AG04450 (cell line): ENCODE measurements at regions of chr11 and their contacts with region 1.

Region 1: DNA sequence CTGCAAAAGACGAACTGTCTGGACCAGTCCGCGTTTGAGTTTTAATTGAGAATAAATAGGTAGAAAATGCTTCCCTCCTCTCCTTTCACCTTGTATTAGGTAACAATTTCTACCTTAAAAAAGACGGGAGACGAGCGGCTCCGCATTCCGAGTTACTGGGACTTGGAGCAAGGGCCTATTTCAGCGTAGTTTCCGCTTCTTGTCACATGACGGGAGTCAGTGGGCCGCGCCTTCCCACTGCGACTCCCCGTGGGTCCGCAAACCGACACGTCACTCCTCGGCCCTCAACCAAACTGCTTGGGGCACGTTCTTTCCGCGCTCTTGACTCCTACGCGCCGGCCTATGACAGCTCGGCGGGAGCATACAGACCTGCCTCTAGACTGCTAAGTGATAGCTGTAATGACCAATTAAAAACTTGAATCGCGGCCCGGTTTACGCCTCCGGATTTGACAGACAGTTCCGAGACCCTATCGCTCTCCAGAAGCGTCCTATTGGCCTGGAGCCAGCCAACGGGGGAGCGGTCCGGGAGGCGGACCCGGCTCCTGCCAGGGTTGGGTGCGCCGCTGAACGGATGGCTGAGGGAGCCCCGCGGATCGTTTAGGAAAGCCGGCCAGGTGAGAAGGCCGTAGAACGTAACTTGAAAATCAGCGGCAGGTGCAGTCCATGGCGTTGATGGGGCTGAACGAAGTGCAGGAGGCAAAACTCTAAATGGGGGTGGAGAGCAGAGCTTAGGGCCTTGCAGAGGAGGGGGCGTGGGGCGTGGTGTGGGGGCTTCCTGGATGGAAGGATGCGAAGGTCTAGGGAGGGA is at the start of gene STT3A:
- DNase-seq: peak; percentile 100
- H3K4me3 ChIP-seq: peak within 1 kb of the TSS; percentile 98
- H3K27ac ChIP-seq: peak within 1 kb of the TSS; percentile 99
- H3K27me3 ChIP-seq: no peaks in the 10 kb centered on the region
- CTCF ChIP-seq: no peak
- polyA plus RNA-seq, gene STT3A: 382 and 401 TPM in 2 replicates

Region 2: DNA sequence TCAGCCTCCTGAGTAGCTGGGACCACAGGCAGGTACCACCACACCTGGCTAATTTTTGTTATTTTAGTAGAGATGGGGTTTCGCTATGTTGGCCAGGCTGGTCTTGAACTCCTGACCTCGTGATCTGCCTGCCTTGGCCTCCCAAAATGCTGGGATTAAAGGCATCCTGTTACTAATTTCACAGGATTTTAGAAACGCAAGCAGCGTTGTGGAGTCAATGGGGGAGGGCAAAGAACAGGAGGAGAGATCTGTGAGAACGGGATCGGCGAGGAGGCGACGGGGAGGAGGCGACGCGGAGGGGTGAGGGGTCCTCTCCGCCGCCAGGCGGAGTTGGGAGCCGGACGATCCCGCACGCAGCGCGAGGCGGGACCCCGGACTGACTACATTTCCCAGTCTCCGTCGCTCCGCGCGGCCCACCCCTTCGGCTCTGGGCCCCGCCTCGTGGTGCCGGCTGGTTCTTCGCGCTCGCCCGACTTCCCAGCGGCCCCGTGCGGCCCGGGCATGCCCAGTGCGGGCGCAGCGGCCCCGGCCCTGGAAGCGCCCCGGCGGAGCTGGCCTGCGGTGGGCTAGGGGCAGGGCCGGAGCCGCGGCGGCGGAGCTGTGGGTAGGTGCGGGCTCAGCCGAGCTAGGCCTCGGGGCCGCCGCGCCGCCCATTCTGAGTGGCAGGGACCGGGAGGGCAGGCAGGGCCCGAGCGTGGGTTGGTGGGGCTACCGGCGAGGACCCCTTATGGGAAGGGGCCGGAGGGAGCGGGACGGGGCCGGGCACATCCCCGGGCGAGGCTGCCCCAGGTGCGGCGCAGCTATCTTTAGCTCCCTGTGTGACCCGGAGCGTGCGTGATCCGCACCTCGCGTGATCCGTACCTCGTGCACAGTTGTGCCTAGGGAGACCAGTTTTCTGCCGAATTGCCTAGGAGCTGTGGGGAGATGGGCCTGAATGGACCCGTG is 23.3 kb before region 1 on chr11 and contains the start of gene EI24:
- CTCF ChIA-PET with region 1: no interaction called
- POLR2A ChIA-PET with region 1: interaction called, 14 read pairs
- DNase-seq: peak; percentile 78
- H3K4me3 ChIP-seq: peak within 1 kb of the TSS; percentile 96
- H3K27ac ChIP-seq: peak within 1 kb of the TSS; percentile 31
- H3K27me3 ChIP-seq: no peaks in the 10 kb centered on the region
- CTCF ChIP-seq: peak; percentile 71
- polyA plus RNA-seq, gene EI24: 129 and 150 TPM in 2 replicates

Region 3: DNA sequence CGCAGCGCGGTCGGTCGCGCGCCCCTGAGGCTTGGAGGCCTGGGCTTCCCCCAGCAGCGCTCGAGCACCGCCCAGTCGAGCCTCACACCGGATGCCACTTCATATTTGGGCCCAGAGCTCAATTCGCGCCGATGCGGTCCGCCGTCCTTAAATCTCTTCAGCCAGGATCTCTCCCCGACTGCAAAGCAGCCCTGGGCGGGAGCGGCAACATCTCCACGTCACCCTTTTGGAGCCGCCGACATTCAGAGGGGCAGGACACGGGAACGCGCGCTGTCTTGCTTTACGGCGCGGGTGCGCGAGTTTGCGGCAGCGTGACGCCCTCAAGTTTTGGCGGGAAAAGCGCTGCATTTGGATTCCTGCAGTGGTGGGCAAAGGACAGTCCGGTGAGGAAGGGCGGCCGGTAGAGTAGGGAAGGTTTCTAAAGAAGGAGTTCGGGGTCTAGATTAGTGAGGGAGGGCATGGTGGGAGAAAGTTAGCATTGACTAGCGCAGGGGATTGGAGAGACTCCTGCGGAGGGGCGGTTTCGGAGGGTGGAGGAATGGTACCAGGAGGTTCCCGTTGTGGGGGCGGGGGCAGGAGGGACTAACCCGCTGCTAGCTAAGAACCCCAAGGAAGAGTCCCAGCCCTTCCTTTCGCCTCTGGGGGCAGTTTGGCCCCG is 33.2 kb after region 1 on chr11:
- CTCF ChIA-PET with region 1: interaction called, 3 read pairs
- POLR2A ChIA-PET with region 1: interaction called, 11 read pairs
- DNase-seq: peak; percentile 59
- H3K4me3 ChIP-seq: peak overlapping the region; percentile 75
- H3K27ac ChIP-seq: peak overlapping the region; percentile 92
- H3K27me3 ChIP-seq: no peaks in the 10 kb centered on the region
- CTCF ChIP-seq: no peak